CD4-positive, alpha-beta T cell (primary cell): ENCODE measurements at regions of chr7 and their contacts with region 1.

Region 1: DNA sequence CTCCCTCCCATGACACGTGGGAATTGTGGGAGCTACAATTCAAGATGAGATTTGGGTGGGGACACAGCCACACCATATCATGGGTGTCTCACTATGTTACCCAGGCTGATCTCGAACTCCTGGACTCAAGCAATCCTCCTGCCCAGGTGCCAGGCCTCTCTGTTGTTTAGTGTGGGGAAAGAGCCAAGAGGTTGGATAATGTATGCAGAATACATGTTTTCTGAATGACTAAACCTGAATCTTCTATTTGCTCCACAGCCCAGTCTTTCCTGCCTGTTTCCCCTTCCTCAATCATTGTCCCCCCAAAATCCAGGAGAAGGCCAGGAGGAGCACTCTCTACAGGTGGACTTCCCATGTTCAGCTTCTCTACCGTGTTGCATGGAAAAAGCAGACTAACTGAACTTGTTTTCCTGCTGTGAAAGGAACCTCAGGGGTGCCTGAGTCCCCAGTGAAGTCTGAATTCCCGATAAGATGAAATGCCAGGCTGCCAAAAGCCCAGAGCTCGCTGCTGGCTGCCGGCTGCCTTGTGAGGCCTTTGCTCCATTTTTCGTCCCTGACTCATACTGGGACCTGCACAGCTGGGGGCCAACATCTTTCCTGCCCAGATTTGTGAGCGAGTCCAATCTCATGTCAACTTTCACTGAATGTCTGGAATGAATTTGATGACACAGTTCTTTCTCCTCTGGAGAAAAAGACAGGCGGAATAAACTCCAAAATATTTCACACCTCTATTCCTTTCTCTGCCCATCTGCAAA is 588.0 kb downstream of the CALN1 start:
- DNase-seq: no peak
- ATAC-seq: no peak
- H3K4me3 ChIP-seq: no peak overlapping the region
- H3K4me3 Mint-ChIP-seq: no peak overlapping the region
- H3K27ac ChIP-seq: no peak overlapping the region
- H3K27ac Mint-ChIP-seq: no peak overlapping the region
- H3K4me1 ChIP-seq: no peaks in the 10 kb centered on the region
- H3K4me1 Mint-ChIP-seq: no peaks in the 10 kb centered on the region
- H3K27me3 ChIP-seq: no peaks in the 10 kb centered on the region
- H3K27me3 Mint-ChIP-seq: no peaks in the 10 kb centered on the region
- CTCF ChIP-seq: no peak

Region 2: DNA sequence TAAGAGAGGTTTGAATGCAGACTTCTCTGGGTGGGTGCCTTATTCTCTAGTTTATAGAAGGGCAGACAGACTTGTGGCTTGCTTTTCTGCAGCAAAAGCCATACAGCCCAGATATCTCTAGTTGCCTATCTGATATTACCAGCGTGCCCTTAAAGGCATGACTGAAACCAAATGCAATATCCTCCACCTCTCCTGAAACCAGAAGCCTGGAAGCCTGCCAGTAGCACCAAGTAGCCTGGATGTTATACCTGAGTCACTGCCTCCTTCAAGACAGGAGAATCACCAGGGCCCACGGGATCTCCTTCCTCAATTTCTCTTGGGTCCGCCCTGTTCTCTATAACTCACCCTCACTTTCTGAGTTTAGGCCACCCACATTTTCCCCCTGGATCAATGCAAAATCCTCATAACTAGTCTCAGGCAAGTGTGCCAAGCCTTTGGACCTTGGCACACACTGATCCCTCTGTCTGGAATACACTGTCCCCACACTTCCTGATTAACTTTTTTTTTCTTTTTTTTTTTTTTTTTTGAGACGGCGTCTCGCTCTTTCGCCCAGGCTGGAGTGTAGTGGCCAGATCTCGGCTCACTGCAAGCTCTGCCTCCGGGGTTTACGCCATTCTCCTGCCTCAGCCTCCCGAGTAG is 53.8 kb before region 1 on chr7:
- CTCF ChIA-PET with region 1: no interaction called
- POLR2A ChIA-PET with region 1: no interaction called
- intact Hi-C with region 1: no loop called
- DNase-seq: no peak
- ATAC-seq: no peak
- H3K4me3 ChIP-seq: no peak overlapping the region
- H3K4me3 Mint-ChIP-seq: no peak overlapping the region
- H3K27ac ChIP-seq: no peak overlapping the region
- H3K27ac Mint-ChIP-seq: no peak overlapping the region
- H3K4me1 ChIP-seq: no peaks in the 10 kb centered on the region
- H3K4me1 Mint-ChIP-seq: no peaks in the 10 kb centered on the region
- H3K27me3 ChIP-seq: no peaks in the 10 kb centered on the region
- H3K27me3 Mint-ChIP-seq: no peaks in the 10 kb centered on the region
- CTCF ChIP-seq: no peak

Region 3: DNA sequence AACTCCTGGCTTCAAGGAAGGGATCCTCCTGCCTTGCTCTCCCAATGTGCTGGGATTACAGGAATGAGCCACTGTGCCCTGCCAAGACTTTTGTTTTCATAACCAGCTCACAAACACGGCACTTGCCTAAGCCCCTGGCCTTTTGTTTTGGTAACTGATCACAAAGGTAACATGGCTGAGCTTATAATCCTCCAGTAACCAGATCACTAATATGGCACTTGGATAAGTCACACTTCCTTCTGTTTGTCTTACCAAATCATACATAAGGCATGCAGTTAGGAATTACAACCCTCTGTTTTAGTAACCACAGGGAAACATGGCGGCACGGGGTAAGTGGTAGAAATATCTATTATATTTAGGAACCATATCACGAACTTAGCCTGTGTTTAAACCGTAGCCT is 10.9 kb after region 1 on chr7:
- CTCF ChIA-PET with region 1: no interaction called
- POLR2A ChIA-PET with region 1: no interaction called
- intact Hi-C with region 1: loop called in 1 of 2 experiments (anchors 1 kb)
- DNase-seq: no peak
- ATAC-seq: no peak
- H3K4me3 ChIP-seq: no peak overlapping the region
- H3K4me3 Mint-ChIP-seq: no peak overlapping the region
- H3K27ac ChIP-seq: no peak overlapping the region
- H3K27ac Mint-ChIP-seq: no peak overlapping the region
- H3K4me1 ChIP-seq: no peaks in the 10 kb centered on the region
- H3K4me1 Mint-ChIP-seq: no peaks in the 10 kb centered on the region
- H3K27me3 ChIP-seq: no peaks in the 10 kb centered on the region
- H3K27me3 Mint-ChIP-seq: no peaks in the 10 kb centered on the region
- CTCF ChIP-seq: no peak

Region 4: GRCh38 chr7:72003236-72003635 is 179.1 kb after region 1 on chr7:
- CTCF ChIA-PET with region 1: no interaction called
- POLR2A ChIA-PET with region 1: no interaction called
- intact Hi-C with region 1: no loop called
- DNase-seq: no peak
- ATAC-seq: no peak
- H3K4me3 ChIP-seq: no peak overlapping the region
- H3K4me3 Mint-ChIP-seq: no peak overlapping the region
- H3K27ac ChIP-seq: no peak overlapping the region
- H3K27ac Mint-ChIP-seq: no peak overlapping the region
- H3K4me1 ChIP-seq: no peaks in the 10 kb centered on the region
- H3K4me1 Mint-ChIP-seq: no peaks in the 10 kb centered on the region
- H3K27me3 ChIP-seq: no peaks in the 10 kb centered on the region
- H3K27me3 Mint-ChIP-seq: no peaks in the 10 kb centered on the region
- CTCF ChIP-seq: no peak